Activated B cell treated with CpG ODN at 0.5 μM for 24 hours (primary cell): ENCODE measurements at regions of chr21 and their contacts with region 1.

Region 1: DNA sequence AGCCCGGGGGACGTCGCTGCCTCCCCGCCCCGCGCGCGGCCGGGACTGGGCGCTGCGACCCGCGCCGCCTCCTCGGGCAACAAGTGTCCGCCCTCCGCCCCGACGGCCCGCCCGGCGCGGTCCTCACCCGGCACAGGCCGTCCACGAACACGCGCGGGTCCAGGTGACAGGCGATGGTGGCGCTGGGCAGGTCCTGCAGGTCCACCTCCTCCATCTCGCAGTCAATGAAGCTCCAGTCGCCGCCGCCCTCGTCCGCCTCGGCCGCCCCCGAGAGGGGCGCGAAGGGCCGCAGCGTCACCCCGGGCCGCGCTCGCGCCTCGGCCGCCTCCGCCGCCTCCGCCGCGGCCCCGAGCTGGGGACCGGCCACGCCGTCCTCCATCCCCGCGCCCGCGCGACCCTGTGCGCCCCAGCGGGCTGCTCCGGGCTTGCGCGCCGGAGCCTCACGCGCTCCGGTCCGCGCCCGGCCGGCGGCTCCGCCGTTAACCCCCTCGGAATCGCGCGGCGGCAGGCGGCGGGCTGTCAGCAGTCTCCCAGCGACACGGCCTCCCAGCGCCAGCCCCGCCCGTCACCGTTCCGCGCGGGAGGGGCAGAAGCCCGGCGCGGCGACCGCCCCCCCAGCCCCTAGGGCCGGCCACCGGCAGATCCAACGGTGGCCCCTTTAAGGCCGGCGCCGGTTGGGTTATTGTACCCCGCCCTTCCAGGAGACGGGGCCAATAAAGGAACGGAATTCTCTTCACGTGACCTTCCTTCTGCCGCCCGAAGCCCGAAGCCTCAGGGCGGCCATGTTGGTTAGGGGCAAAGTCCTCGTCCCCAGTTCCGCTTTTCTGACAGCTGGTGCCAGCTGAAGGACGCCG is at the start of gene RCAN1:
- DNase-seq: peak; percentile 78
- ATAC-seq: peak; percentile 94
- H3K4me3 Mint-ChIP-seq: peak within 1 kb of the TSS; percentile 82
- H3K27ac Mint-ChIP-seq: peak within 1 kb of the TSS; percentile 82
- H3K4me1 Mint-ChIP-seq: peaks cover 7% of the 10 kb centered on the region
- H3K27me3 Mint-ChIP-seq: peaks cover 1% of the 10 kb centered on the region
- CTCF ChIP-seq: no peak
- total RNA-seq, gene RCAN1: 5.8 and 6.3 TPM in 2 replicates

Region 2: GRCh38 chr21:34545079-34545884 is 69.6 kb before region 1 on chr21:
- CTCF ChIA-PET with region 1: no interaction called
- POLR2A ChIA-PET with region 1: no interaction called
- intact Hi-C with region 1: loop called (anchors 5 kb)
- DNase-seq: peak; percentile 28
- ATAC-seq: peak; percentile 80
- H3K4me3 Mint-ChIP-seq: peak overlapping the region; percentile 59
- H3K27ac Mint-ChIP-seq: peak overlapping the region; percentile 82
- H3K4me1 Mint-ChIP-seq: peaks cover 34% of the 10 kb centered on the region
- H3K27me3 Mint-ChIP-seq: no peaks in the 10 kb centered on the region
- CTCF ChIP-seq: no peak